Caco-2 (cell line): ENCODE measurements at regions of chr5 and their contacts with region 1.

Region 1: GRCh38 chr5:1167728-1168709 is 33.4 kb upstream of the SLC6A19 start:
- DNase-seq: peak; percentile 76 to 83
- H3K4me3 ChIP-seq: peak overlapping the region; percentile 35
- H3K4me3 Mint-ChIP-seq: peak overlapping the region; percentile 70
- H3K27ac Mint-ChIP-seq: no peak overlapping the region
- H3K4me1 ChIP-seq: no peaks in the 10 kb centered on the region
- H3K4me1 Mint-ChIP-seq: peaks cover 17% of the 10 kb centered on the region
- H3K27me3 ChIP-seq: no peaks in the 10 kb centered on the region
- H3K27me3 Mint-ChIP-seq: no peaks in the 10 kb centered on the region
- CTCF ChIP-seq: peak; percentile 70 to 94

Region 2: DNA sequence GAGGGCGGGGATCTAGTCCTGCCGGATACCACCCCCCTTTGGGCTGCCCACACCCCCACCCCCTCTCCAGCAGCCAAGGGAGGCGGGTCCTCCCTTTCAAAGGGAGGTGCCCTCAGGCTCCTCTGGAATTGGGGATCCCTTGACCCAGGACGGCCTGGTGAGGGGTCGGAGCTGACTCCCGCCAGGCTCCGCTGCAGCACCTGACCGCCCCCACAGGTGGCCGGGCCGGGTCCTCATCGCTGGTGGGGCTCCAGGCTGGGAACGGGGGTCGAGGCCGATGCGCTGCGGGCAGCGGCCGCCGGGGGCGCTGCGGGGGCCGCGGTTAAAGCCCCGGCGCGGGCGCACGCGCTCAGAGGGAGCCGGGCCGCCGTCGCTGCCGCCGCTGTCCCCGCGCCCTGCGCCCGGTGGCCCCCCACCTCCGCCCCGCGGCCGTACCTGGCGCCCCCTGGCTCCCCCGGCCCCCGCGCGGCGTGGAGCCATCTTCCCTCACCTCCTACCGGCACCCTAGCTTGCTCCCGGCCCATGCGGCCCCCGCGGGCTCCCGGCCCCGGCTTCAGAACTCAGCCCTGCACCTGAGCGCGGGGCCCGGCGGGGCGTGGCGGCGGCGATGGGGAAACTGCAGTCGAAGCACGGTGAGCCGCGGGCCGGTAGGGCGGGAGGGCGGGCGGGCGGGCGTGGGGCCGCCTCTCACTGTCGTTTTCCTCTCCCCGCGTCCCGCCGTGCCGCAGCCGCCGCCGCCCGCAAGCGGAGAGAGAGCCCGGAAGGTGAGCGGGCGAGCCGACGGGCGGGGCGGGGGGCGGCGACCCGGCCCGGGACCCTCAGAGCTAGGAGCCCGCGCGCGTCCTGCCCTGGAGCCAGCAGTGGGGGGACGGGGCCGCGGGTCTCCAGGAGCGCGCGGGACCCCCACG is 159.3 kb before region 1 on chr5 and contains the start of gene NKD2:
- CTCF ChIA-PET with region 1: interaction called, 7 read pairs
- POLR2A ChIA-PET with region 1: no interaction called
- intact Hi-C with region 1: loop called (anchors 1 kb)
- DNase-seq: peak; percentile 39 to 76
- H3K4me3 ChIP-seq: peak within 1 kb of the TSS; percentile 50
- H3K4me3 Mint-ChIP-seq: peak within 1 kb of the TSS; percentile 63
- H3K27ac Mint-ChIP-seq: no peak within 1 kb of the TSS
- H3K4me1 ChIP-seq: peaks cover 36% of the 10 kb centered on the region
- H3K4me1 Mint-ChIP-seq: peaks cover 10% of the 10 kb centered on the region
- H3K27me3 ChIP-seq: no peaks in the 10 kb centered on the region
- H3K27me3 Mint-ChIP-seq: no peaks in the 10 kb centered on the region
- CTCF ChIP-seq: peak; percentile 39 to 81
- total RNA-seq, gene NKD2: 13.6 and 17.7 TPM in 2 replicates

Region 3: DNA sequence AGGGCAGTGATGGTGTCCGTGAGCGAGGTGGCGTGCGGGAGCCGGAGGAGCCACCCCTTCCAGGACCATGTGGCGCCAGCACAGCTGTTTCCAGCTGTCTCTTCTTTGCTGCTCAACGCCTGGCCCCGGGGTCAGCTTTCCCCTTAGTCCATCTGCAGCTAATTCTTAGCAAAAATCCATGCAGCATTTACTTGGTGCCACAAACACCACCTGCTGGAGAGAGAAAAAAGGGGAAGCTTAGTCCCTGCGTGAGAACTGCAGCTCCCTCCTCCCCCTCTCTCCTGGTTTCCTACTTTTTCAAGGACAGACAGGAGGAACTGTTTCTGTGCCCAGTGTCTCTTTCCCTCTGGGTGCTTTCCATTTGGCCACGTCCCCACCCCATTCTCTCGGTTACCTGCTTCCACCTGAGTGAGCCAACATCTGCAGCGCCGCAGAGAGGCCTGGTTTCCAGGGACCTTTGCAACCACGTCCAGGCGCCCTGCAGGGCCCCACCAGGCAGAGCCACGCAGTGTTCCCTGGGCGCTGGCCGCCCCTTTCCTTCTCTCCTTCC is 36.7 kb after region 1 on chr5:
- CTCF ChIA-PET with region 1: interaction called, 36 read pairs
- POLR2A ChIA-PET with region 1: no interaction called
- intact Hi-C with region 1: loop called (anchors 1 kb)
- DNase-seq: peak; percentile 68 to 72
- H3K4me3 ChIP-seq: no peak overlapping the region
- H3K4me3 Mint-ChIP-seq: no peak overlapping the region
- H3K27ac Mint-ChIP-seq: no peak overlapping the region
- H3K4me1 ChIP-seq: peaks cover 44% of the 10 kb centered on the region
- H3K4me1 Mint-ChIP-seq: no peaks in the 10 kb centered on the region
- H3K27me3 ChIP-seq: no peaks in the 10 kb centered on the region
- H3K27me3 Mint-ChIP-seq: no peaks in the 10 kb centered on the region
- CTCF ChIP-seq: peak; percentile 55 to 84

Region 4: GRCh38 chr5:1244976-1245375 is 77.0 kb after region 1 on chr5:
- CTCF ChIA-PET with region 1: no interaction called
- POLR2A ChIA-PET with region 1: no interaction called
- intact Hi-C with region 1: loop called (anchors 1 kb)
- DNase-seq: peak; percentile 52 to 55
- H3K4me3 ChIP-seq: no peak overlapping the region
- H3K4me3 Mint-ChIP-seq: no peak overlapping the region
- H3K27ac Mint-ChIP-seq: no peak overlapping the region
- H3K4me1 ChIP-seq: no peaks in the 10 kb centered on the region
- H3K4me1 Mint-ChIP-seq: no peaks in the 10 kb centered on the region
- H3K27me3 ChIP-seq: no peaks in the 10 kb centered on the region
- H3K27me3 Mint-ChIP-seq: peaks cover 12% of the 10 kb centered on the region
- CTCF ChIP-seq: peak; percentile 28 to 59

Region 5: GRCh38 chr5:1280177-1281037 is 112.4 kb after region 1 on chr5:
- CTCF ChIA-PET with region 1: no interaction called
- POLR2A ChIA-PET with region 1: no interaction called
- intact Hi-C with region 1: no loop called
- DNase-seq: no peak
- H3K4me3 ChIP-seq: no peak overlapping the region
- H3K4me3 Mint-ChIP-seq: no peak overlapping the region
- H3K27ac Mint-ChIP-seq: no peak overlapping the region
- H3K4me1 ChIP-seq: no peaks in the 10 kb centered on the region
- H3K4me1 Mint-ChIP-seq: no peaks in the 10 kb centered on the region
- H3K27me3 ChIP-seq: no peaks in the 10 kb centered on the region
- H3K27me3 Mint-ChIP-seq: no peaks in the 10 kb centered on the region
- CTCF ChIP-seq: no peak

Region 6: GRCh38 chr5:1641560-1642166 is 473.6 kb after region 1 on chr5:
- CTCF ChIA-PET with region 1: interaction called, 5 read pairs
- POLR2A ChIA-PET with region 1: no interaction called
- intact Hi-C with region 1: loop called (anchors 10 kb)
- DNase-seq: peak; percentile 76 to 82
- H3K4me3 ChIP-seq: no peak overlapping the region
- H3K4me3 Mint-ChIP-seq: no peak overlapping the region
- H3K27ac Mint-ChIP-seq: no peak overlapping the region
- H3K4me1 ChIP-seq: no peaks in the 10 kb centered on the region
- H3K4me1 Mint-ChIP-seq: peaks cover 5% of the 10 kb centered on the region
- H3K27me3 ChIP-seq: peaks cover 2% of the 10 kb centered on the region; the same call in 1 of the 2 replicates
- H3K27me3 Mint-ChIP-seq: peaks cover 7% of the 10 kb centered on the region
- CTCF ChIP-seq: peak; percentile 86 to 98